ENCODE measurements at regions of chr12 and their contacts with region 1.

Region 1: DNA sequence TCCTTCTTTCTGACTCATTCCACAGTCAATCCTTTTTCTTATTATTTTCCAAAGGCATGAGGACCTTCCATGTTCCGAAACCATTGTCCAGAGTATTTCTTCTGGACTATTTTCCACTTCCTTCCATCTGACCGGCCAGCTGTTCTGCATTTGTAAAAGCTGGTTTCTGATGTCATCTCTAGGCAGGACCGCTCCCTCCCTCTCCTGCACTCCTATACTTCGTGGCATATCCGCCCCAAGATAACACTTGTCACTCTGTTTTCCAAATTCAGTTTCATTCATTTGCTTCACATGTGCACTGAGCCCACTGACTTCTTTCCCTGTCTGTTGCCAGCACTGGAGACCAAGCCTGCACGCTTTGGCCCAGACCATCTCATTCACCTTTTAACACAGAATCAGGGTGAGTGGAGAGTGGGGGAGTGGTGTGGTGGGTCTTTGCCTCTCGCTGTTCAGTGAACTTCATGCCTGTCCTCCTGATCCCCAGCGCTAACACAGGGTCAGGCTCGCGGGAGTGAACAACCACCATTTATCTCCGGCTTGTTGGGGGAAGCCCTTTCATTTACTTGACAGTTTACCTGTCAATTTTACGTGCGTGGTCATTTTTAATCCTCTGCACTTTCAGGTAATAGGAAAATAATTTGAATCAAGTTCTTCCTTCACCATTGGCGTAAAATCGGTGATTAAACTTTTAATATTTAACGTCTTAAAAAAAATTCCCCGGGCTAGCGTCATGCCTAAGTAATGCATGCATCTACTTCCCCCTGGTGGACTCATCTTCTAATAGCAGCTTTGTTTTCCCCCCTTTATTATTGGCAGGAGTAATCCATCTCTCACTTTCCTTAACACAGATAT is 52.5 kb downstream of the C12orf75 start:
- DNase-seq: peak; percentile 61
- CTCF ChIP-seq: peak; percentile 61

Region 2: GRCh38 chr12:104177663-104178501 is 1205.1 kb before region 1 on chr12:
- in situ Hi-C with region 1: loop called (anchors 25 kb)
- DNase-seq: no peak
- CTCF ChIP-seq: no peak

Region 3: GRCh38 chr12:105279460-105280056 is 103.4 kb before region 1 on chr12:
- in situ Hi-C with region 1: loop called (anchors 25 kb)
- DNase-seq: peak; percentile 33
- CTCF ChIP-seq: peak; percentile 70